ENCODE measurements at regions of chr20 and their contacts with region 1.

Region 1: GRCh38 chr20:1466211-1467081 is at the start of gene NSFL1C:
- DNase-seq: peak; percentile 90 to 97
- H3K4me3 ChIP-seq: peak within 1 kb of the TSS; percentile 82 to 93
- H3K27ac ChIP-seq: peak within 1 kb of the TSS; percentile 85 to 88
- H3K4me1 ChIP-seq: peaks cover 0 to 58% (median 45%) of the 10 kb centered on the region in 4 donors
- H3K27me3 ChIP-seq: no peaks in the 10 kb centered on the region
- CTCF ChIP-seq: peak; percentile 95 to 99

Region 2: DNA sequence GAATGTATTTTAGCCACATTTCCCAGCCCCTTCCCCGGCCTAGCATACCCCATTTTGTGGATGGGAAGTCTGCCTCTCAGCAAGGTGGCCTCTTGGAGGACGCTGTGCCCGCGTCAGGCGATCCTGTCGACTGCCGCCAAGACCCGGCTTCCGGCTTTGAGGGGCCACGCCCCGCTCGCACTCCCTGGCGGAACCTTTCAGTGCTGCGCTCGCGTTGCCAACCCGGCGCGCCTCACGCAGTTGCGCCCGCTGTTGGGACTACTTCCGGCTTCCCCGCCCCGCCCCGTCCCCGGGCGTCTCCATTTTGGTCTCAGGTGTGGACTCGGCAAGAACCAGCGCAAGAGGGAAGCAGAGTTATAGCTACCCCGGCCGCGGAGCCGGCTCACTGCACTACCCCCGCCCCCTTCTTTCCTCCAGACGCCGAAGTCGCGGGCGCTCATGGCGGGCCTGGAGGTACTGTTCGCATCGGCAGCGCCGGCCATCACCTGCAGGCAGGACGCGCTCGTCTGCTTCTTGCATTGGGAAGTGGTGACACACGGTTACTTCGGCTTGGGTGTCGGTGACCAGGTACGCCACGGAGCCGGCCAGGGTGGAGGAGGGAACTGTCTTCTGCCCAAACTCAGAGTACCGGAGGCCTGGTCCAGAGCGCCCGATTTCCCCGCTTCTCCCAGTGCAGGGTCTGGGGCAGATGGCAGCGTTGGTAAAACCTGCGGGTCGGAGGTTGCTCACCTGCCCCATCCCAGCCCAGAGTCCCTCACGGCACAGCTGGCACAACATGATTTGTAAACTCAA is 347.9 kb before region 1 on chr20 and contains the start of gene PSMF1:
- intact Hi-C with region 1: loop called (anchors 10 kb)
- DNase-seq: peak; percentile 93 to 97
- H3K4me3 ChIP-seq: peak within 1 kb of the TSS; percentile 77
- H3K27ac ChIP-seq: peak within 1 kb of the TSS; percentile 71 to 77
- H3K4me1 ChIP-seq: peaks cover 0 to 54% (median 39%) of the 10 kb centered on the region in 4 donors
- H3K27me3 ChIP-seq: no peaks in the 10 kb centered on the region
- CTCF ChIP-seq: peak in 1 of 2 experiments; percentile 13

Region 3: GRCh38 chr20:1313236-1313964 is 153.0 kb before region 1 on chr20:
- intact Hi-C with region 1: loop called (anchors 2 kb)
- DNase-seq: peak; percentile 61 to 83
- H3K4me3 ChIP-seq: peak overlapping the region in 1 of 2 donors; percentile 12
- H3K27ac ChIP-seq: no peak overlapping the region
- H3K4me1 ChIP-seq: peaks cover 0 to 11% (median 7%) of the 10 kb centered on the region in 4 donors
- H3K27me3 ChIP-seq: no peaks in the 10 kb centered on the region
- CTCF ChIP-seq: peak; percentile 93 to 95

Region 4: GRCh38 chr20:1370548-1371110 is 95.8 kb before region 1 on chr20:
- intact Hi-C with region 1: no loop called
- DNase-seq: peak in 1 of 2 donors; percentile 51
- H3K4me3 ChIP-seq: no peak overlapping the region
- H3K27ac ChIP-seq: no peak overlapping the region
- H3K4me1 ChIP-seq: peaks cover 0 to 34% (median 13%) of the 10 kb centered on the region in 4 donors
- H3K27me3 ChIP-seq: no peaks in the 10 kb centered on the region
- CTCF ChIP-seq: no peak

Region 5: DNA sequence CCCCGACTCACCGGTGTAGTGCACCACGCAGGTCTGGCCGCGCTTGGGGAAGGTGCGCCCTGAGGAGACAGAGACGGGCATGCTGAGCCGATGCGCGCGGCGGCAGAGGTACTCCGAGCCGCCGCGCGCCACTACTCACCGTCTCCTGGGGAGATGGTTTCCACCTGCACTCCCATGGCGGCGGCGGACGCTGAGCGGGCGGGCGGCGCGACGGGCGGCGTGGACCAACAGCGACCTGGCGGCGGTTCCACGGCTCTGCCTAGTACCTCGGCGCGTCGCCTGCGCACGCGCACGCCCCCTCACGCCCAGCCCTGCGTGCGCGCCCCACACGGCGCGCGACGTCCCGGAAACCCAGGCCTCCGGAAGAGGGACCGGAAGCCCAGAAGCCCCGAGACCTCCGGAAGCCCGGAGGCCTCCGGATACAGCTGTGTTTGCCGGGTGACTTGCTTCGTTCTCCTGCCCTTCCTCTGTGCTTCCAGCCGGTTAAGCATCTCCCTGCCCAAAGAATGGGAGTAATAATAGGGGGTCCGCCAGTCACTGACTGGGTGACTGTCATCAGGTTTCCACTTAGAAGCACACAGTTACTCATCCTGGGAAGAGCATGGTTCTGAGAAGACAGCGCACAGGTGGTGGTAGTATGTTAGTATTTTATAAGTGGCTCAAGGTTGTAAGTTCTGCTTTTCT is 73.5 kb before region 1 on chr20 and contains the start of gene FKBP1A:
- intact Hi-C with region 1: loop called (anchors 5 kb)
- DNase-seq: peak; percentile 85 to 94
- H3K4me3 ChIP-seq: peak within 1 kb of the TSS; percentile 70 to 84
- H3K27ac ChIP-seq: peak within 1 kb of the TSS; percentile 71 to 72
- H3K4me1 ChIP-seq: peaks cover 0 to 47% (median 38%) of the 10 kb centered on the region in 4 donors
- H3K27me3 ChIP-seq: peaks cover 0 to 5% of the 10 kb centered on the region in 2 donors
- CTCF ChIP-seq: peak; percentile 17 to 26

Region 6: GRCh38 chr20:2651772-2652723 is 1185.6 kb after region 1 on chr20 and contains the start of gene NOP56:
- intact Hi-C with region 1: loop called (anchors 5 kb)
- DNase-seq: peak; percentile 85 to 94
- H3K4me3 ChIP-seq: peak within 1 kb of the TSS; percentile 66 to 84
- H3K27ac ChIP-seq: peak within 1 kb of the TSS; percentile 82 to 89
- H3K4me1 ChIP-seq: peaks cover 0 to 21% (median 13%) of the 10 kb centered on the region in 4 donors
- H3K27me3 ChIP-seq: no peaks in the 10 kb centered on the region
- CTCF ChIP-seq: no peak